ENCODE measurements at regions of chr19 and their contacts with region 1.

Region 1: DNA sequence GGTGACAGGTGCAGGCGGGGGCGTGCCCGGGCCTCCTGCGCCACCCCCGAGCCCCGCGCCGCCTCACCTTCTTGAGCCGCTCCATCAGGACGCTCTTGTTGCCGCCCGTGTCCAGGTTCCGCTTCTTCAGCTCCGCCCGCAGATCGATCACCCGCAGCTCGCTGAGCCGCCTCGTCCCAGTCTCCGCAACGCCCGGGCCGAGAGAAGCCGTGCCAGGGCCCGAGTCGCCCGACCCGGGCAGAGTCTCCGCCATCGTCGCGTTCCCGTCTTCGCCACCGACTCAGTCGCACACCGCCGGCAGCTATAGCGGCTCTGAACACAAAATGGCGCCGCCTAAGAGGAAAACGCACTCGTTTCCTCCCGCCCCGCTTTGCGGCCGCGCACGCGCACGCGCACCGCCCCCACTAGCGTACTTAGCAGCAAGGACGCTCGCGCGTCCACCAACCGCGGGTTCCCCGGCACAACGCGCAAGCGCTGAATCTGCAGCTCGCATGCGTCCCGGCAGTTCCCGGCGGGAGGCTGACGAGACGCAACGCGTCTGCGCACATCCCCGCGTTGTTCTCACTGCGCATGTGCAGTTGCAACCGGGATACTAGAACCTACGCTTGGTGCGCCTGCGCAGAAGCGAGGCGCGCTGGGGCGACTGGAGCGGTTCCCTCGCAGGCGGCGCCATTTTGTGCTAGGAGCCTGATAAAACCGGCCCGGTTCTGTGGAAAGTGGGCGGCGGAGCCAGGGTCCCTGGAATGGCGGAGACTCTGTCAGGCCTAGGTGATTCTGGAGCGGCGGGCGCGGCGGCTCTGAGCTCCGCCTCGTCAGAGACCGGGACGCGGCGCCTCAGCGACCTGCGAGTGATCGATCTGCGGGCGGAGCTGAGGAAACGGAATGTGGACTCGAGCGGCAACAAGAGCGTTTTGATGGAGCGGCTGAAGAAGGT is at the starts of genes SAFB and SAFB2:
- DNase-seq: peak; percentile 96 to 100 (median 100)
- ATAC-seq: peak; percentile 91
- H3K4me3 ChIP-seq: peak within 1 kb of the TSS; percentile 91
- H3K4me3 Mint-ChIP-seq: peak within 1 kb of the TSS; percentile 97 to 100 (median 100)
- H3K27ac ChIP-seq: peak within 1 kb of the TSS; percentile 97
- H3K27ac Mint-ChIP-seq: peak within 1 kb of the TSS; percentile 99 to 100 (median 100)
- H3K4me1 ChIP-seq: peaks cover 54 to 66% of the 10 kb centered on the region in 2 donors
- H3K4me1 Mint-ChIP-seq: peaks cover 52 to 79% (median 70%) of the 10 kb centered on the region in 7 donors
- H3K27me3 ChIP-seq: no peaks in the 10 kb centered on the region
- H3K27me3 Mint-ChIP-seq: peaks cover 0 to 5% (median 0%) of the 10 kb centered on the region in 5 donors
- total RNA-seq, gene SAFB: 141 to 203 (median 174) TPM
- total RNA-seq, gene SAFB2: 112 to 250 (median 243) TPM

Region 2: GRCh38 chr19:5680437-5681368 is 58.0 kb after region 1 on chr19 and contains the starts of genes HSD11B1L and MICOS13:
- CTCF ChIA-PET with region 1: no interaction called
- POLR2A ChIA-PET with region 1: interaction called, 4 read pairs
- intact Hi-C with region 1: loop called (anchors 1 kb)
- DNase-seq: peak; percentile 98 to 99 (median 99)
- ATAC-seq: peak; percentile 96
- H3K4me3 ChIP-seq: peak within 1 kb of the TSS; percentile 100
- H3K4me3 Mint-ChIP-seq: peak within 1 kb of the TSS; percentile 85 to 97 (median 94)
- H3K27ac ChIP-seq: peak within 1 kb of the TSS; percentile 98
- H3K27ac Mint-ChIP-seq: peak within 1 kb of the TSS; percentile 94 to 100 (median 97)
- H3K4me1 ChIP-seq: peaks cover 8 to 18% of the 10 kb centered on the region in 2 donors
- H3K4me1 Mint-ChIP-seq: peaks cover 20 to 33% (median 25%) of the 10 kb centered on the region in 7 donors
- H3K27me3 ChIP-seq: no peaks in the 10 kb centered on the region
- H3K27me3 Mint-ChIP-seq: peaks cover 0 to 18% (median 0%) of the 10 kb centered on the region in 5 donors
- total RNA-seq, gene HSD11B1L: 2.8 to 5.2 (median 3.6) TPM
- total RNA-seq, gene MICOS13: 26.1 to 49.3 (median 38.4) TPM

Region 3: DNA sequence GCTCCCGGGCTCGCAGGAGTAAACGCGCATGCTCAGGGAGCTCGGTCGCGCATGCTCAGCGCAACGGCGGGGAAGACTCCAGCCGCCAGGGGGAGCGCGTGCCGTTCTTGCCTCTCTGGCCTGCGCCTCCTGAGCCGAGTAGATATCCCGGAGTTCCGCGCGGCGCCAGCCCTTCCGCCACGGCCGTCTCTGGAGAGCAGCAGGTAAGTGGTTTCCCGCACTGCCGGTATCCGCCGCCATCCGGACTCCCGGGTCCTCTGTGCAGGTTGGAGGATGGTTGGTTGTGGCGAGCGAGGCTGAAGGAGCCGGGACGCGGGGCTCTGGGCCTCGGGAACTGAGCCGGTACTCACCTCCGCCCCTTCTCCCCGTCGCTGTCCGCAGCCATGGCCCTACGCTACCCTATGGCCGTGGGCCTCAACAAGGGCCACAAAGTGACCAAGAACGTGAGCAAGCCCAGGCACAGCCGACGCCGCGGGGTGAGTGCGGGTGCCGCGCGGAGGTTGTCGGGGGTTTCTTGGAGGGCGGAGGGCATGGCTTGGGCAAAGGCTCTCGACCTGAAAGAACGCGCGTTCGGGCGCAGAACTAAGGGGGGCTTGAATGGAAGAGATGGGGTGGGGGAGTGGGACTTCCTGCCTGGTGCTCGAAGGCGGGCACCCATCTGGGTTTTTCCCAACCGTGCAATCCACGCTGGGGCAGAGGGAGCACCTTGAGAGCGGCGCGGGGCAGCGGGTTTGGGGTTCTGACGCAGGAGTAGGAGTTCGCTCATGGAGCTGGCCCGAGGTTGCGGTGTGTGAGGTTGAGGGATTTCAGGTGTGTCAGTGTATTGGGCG is 67.6 kb after region 1 on chr19 and contains the start of gene RPL36:
- CTCF ChIA-PET with region 1: interaction called, 8 read pairs
- POLR2A ChIA-PET with region 1: interaction called, 18 read pairs
- intact Hi-C with region 1: loop called in 1 of 2 experiments (anchors 2 kb)
- DNase-seq: peak; percentile 95 to 100 (median 99)
- ATAC-seq: peak; percentile 77
- H3K4me3 ChIP-seq: peak within 1 kb of the TSS; percentile 90
- H3K4me3 Mint-ChIP-seq: peak within 1 kb of the TSS; percentile 90 to 98 (median 94)
- H3K27ac ChIP-seq: peak within 1 kb of the TSS; percentile 85
- H3K27ac Mint-ChIP-seq: peak within 1 kb of the TSS; percentile 89 to 97 (median 93)
- H3K4me1 ChIP-seq: peaks cover 12 to 21% of the 10 kb centered on the region in 2 donors
- H3K4me1 Mint-ChIP-seq: peaks cover 5 to 39% (median 33%) of the 10 kb centered on the region in 7 donors
- H3K27me3 ChIP-seq: no peaks in the 10 kb centered on the region
- H3K27me3 Mint-ChIP-seq: no peaks in the 10 kb centered on the region
- total RNA-seq, gene RPL36: 865 to 1,786 (median 1,037) TPM

Region 4: GRCh38 chr19:5961969-5962945 is 339.5 kb after region 1 on chr19:
- CTCF ChIA-PET with region 1: no interaction called
- POLR2A ChIA-PET with region 1: no interaction called
- intact Hi-C with region 1: loop called in 1 of 2 experiments (anchors 2 kb)
- DNase-seq: peak; percentile 42 to 92 (median 88)
- ATAC-seq: peak; percentile 96
- H3K4me3 ChIP-seq: peak overlapping the region; percentile 38
- H3K4me3 Mint-ChIP-seq: peak overlapping the region; percentile 79 to 89 (median 84)
- H3K27ac ChIP-seq: peak overlapping the region; percentile 77
- H3K27ac Mint-ChIP-seq: peak overlapping the region; percentile 95 to 100 (median 99)
- H3K4me1 ChIP-seq: peaks cover 56 to 84% of the 10 kb centered on the region in 2 donors
- H3K4me1 Mint-ChIP-seq: peaks cover 69 to 99% (median 89%) of the 10 kb centered on the region in 7 donors
- H3K27me3 ChIP-seq: no peaks in the 10 kb centered on the region
- H3K27me3 Mint-ChIP-seq: no peaks in the 10 kb centered on the region